ENCODE measurements at regions of chr1 and their contacts with region 1.

Region 1: GRCh38 chr1:59971464-59971911 is 44.9 kb upstream of the CYP2J2 start:
- DNase-seq: peak; percentile 55 to 81 (median 62)
- H3K4me3 ChIP-seq: no peak overlapping the region
- H3K27ac ChIP-seq: no peak overlapping the region
- H3K4me1 ChIP-seq: no peaks in the 10 kb centered on the region
- H3K27me3 ChIP-seq: peaks cover 5% of the 10 kb centered on the region
- CTCF ChIP-seq: peak; percentile 69 to 90 (median 84)
- POLR2A ChIP-seq: no peak

Region 2: DNA sequence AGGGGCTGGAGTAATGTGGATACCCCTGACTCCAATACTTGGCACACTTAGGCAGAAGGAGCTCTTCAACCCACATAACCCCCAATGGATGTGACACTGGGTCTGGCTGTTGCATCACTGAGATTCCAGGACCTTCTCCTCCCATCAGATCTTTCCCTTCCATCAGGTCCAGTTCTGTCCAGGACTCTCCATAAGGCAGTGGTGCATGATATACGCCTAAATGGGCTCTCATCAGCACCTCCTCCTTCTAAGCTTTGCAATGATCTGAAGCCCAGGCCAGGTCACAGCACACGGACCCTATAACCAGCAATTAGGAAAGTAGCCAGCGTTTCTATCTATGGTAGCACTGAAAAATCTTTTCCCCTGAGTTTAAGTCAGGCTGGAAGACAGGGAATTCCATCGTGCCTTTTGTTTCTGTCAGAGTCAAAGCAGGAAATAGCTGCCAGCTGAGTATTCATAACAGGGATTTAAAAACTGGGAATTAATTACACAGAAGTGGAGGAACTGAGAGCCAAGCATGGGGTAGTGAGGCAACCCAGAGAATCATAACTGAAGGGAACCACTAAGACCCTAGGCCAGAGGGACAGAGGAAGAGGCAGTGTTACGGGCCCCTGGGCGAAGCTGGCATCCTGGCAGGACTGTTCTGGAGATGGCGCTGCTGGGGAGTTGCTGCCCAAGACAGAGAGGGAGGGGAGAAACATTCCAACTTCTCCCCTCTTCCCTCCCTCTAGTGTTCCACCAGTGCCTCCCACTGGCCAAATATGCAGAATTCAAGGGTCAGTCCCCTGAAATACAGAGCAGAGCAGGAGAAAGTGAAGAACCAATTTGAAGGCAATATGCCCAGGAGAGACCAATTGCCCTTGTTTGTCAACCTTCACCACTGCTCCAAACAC is 194.3 kb before region 1 on chr1:
- intact Hi-C with region 1: no loop called
- DNase-seq: no peak
- H3K4me3 ChIP-seq: no peak overlapping the region
- H3K27ac ChIP-seq: no peak overlapping the region
- H3K4me1 ChIP-seq: no peaks in the 10 kb centered on the region
- H3K27me3 ChIP-seq: no peaks in the 10 kb centered on the region
- CTCF ChIP-seq: no peak
- POLR2A ChIP-seq: no peak

Region 3: DNA sequence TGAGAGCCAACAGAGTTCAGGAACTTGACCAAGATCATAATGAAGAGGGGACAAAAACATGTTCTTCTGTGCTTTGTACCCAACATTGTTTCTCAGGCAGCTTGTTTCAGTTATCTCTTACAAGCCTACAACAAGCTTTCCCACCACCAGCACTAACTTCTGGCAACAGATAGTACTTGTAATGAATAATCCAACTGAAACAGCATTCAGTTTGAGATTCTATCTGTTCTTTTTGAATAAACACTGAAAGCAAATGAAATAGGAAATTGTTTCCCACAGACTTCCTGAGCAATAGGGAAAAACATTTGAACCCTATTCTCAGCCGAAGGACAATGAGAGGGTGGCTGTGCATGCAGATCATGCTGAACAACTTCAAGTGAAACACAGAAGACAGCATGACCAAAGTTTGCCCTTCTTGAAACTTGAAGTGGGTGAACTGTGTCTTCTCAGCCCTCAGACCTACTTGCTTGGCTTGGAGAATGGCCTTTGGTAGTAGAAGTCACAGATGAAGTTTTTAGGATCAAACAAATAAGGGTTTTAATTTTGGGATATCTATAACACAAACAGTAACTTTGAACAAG is 167.9 kb before region 1 on chr1:
- intact Hi-C with region 1: no loop called
- DNase-seq: no peak
- H3K4me3 ChIP-seq: no peak overlapping the region
- H3K27ac ChIP-seq: no peak overlapping the region
- H3K4me1 ChIP-seq: no peaks in the 10 kb centered on the region
- H3K27me3 ChIP-seq: no peaks in the 10 kb centered on the region
- CTCF ChIP-seq: no peak
- POLR2A ChIP-seq: no peak

Region 4: GRCh38 chr1:60132985-60133675 is 161.6 kb after region 1 on chr1:
- intact Hi-C with region 1: loop called in 1 of 2 experiments (anchors 10 kb)
- DNase-seq: no peak
- H3K4me3 ChIP-seq: no peak overlapping the region
- H3K27ac ChIP-seq: no peak overlapping the region
- H3K4me1 ChIP-seq: no peaks in the 10 kb centered on the region
- H3K27me3 ChIP-seq: no peaks in the 10 kb centered on the region
- CTCF ChIP-seq: no peak
- POLR2A ChIP-seq: no peak

Region 5: GRCh38 chr1:60458111-60458510 is 486.6 kb after region 1 on chr1:
- intact Hi-C with region 1: no loop called
- DNase-seq: no peak
- H3K4me3 ChIP-seq: no peak overlapping the region
- H3K27ac ChIP-seq: no peak overlapping the region
- H3K4me1 ChIP-seq: no peaks in the 10 kb centered on the region
- H3K27me3 ChIP-seq: no peaks in the 10 kb centered on the region
- CTCF ChIP-seq: no peak
- POLR2A ChIP-seq: no peak

Measured in adrenal gland (tissue), 19 donors.